ENCODE measurements at regions of chr6 and their contacts with region 1.

Region 1: GRCh38 chr6:35522660-35523658 is 10.3 kb upstream of the TULP1 start:
- DNase-seq: peak; percentile 73 to 81
- H3K4me3 ChIP-seq: no peak overlapping the region
- H3K27ac ChIP-seq: peak overlapping the region in 1 of 3 donors; percentile 10
- H3K4me1 ChIP-seq: peaks cover 0 to 10% of the 10 kb centered on the region in 2 donors
- H3K27me3 ChIP-seq: no peaks in the 10 kb centered on the region
- CTCF ChIP-seq: peak; percentile 94 to 100 (median 96)
- POLR2A ChIP-seq: no peak

Region 2: GRCh38 chr6:35634316-35634715 is 111.4 kb after region 1 on chr6:
- intact Hi-C with region 1: loop called (anchors 10 kb)
- DNase-seq: no peak
- H3K4me3 ChIP-seq: no peak overlapping the region
- H3K27ac ChIP-seq: peak overlapping the region; percentile 10 to 52 (median 15)
- H3K4me1 ChIP-seq: peaks cover 12% of the 10 kb centered on the region in 2 donors
- H3K27me3 ChIP-seq: no peaks in the 10 kb centered on the region
- CTCF ChIP-seq: no peak
- POLR2A ChIP-seq: no peak

Region 3: DNA sequence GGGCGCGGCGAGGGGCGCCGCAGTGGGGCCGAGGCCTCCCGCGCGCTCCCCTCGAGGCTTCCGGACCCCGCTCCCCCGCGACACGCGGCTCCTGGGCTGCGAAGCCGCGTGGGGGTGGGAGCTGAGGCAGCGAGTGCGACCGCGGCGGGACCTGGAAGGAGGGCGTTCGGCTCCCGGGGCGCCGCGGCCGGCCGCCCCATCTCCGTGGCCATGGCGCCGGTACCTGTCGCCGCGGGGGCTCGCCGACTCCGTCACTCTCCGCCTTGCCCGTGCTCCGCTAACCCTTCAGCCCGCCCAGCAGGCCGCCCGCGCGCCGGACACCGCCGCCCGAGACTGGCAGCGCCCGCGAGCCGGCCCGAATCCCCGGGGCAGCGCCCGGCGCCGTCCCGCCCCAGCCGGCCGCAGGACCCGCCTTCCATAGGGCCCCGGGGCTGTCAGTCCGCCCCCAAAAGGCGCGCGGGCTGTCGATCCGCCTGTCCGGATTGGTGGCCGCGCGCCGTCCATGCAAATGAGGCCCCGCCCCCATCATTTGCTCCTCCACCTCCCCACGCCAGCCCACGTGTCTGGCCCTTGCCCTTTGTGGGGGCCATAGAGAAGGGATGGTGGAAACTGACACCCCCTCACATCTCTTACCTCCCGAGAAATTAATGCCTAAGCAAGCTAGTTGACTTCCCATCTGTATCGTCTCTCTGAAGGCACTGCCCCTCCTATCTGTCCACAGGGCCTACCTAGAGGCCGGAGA is 165.8 kb after region 1 on chr6 and contains the start of gene FKBP5:
- intact Hi-C with region 1: no loop called
- DNase-seq: peak; percentile 98 to 99
- H3K4me3 ChIP-seq: peak within 1 kb of the TSS; percentile 50 to 98 (median 94)
- H3K27ac ChIP-seq: peak within 1 kb of the TSS; percentile 94 to 100 (median 99)
- H3K4me1 ChIP-seq: peaks cover 19 to 25% of the 10 kb centered on the region in 2 donors
- H3K27me3 ChIP-seq: no peaks in the 10 kb centered on the region
- CTCF ChIP-seq: no peak
- POLR2A ChIP-seq: peak; percentile 98 to 100
- total RNA-seq, gene FKBP5: 239 to 600 (median 253) TPM

Region 4: DNA sequence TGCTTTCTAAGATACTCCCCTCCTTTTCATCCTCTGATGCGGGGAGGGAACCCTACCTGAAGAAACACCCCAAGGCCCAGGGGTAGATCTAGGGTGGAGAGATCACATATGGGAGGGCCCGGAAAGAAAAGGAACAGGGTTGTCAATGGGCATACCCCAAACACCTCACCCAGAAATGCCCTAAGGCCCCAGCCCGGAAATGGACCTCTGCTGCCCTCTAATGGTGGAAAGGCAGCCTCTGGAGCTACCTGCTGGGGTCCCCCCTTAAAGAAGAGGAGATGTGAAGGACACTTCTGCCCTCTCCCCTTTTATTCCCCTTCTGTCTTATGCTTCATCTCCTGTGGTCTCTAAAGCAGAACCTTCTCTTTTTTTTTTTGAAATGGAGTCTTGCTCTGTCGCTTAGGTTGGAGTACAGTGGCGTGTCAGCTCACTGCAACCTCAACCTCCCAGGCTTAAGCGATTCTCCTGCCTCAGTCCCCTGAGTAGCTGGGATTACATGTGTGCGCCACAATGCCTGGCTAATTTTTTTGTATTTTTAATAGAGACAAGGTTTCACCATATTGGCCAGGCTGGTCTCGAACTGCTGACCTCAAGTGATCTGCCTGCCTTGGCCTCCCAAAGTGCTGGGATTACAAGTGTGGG is 213.4 kb after region 1 on chr6:
- intact Hi-C with region 1: loop called (anchors 2 kb)
- DNase-seq: peak; percentile 76 to 81
- H3K4me3 ChIP-seq: no peak overlapping the region
- H3K27ac ChIP-seq: peak overlapping the region in 1 of 3 donors; percentile 99
- H3K4me1 ChIP-seq: peaks cover 20 to 37% of the 10 kb centered on the region in 2 donors
- H3K27me3 ChIP-seq: no peaks in the 10 kb centered on the region
- CTCF ChIP-seq: peak; percentile 66 to 93 (median 86)
- POLR2A ChIP-seq: no peak

Measured in thyroid gland (tissue), 4 donors.